ENCODE measurements at regions of chr6 and their contacts with region 1.

Region 1: DNA sequence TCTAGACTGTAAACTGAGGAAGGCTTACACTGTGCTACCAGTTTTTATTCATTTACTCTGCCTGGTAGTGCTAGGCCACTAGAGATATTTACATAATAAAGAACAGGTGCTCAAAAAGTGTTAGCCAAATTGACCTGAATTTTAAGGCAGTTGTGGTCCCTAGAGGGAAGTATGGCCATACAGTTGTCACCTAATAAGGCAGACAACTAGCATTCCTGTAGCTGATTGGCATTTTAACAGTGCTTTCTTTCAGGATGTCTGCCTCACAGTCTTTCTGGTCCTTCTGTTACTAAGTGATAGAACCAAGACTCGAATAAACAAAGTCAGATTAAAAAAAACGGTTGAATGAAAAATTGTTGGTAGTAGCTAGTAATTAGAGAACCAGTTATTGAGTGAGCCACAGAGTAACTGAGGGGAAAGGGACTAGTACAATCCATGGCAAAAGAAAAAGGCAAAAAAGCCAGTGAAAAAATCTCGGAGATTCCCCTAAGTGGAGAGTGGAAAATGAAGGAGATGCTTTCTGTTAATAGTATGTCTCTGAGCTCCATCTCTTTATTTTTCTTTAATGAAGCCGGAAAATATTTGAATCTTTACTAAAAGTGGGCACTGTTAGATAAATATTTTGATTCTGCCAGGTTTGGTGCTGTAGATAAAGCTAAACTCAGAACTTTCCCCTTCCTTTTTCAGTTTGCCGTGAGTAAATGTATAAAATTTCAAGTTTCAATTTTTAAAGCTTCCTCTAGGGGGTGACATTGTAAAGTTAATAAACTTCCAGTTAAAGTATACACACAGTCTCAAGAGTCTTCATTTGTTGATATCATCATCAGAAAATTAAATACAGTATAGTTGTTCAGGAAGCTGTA is 9.1 kb downstream of the VTA1 start:
- DNase-seq: no peak
- H3K4me3 ChIP-seq: peak overlapping the region in 1 of 2 donors; percentile 11
- H3K27ac ChIP-seq: no peak overlapping the region
- H3K4me1 ChIP-seq: peaks cover 0 to 18% of the 10 kb centered on the region in 2 donors
- H3K27me3 ChIP-seq: no peaks in the 10 kb centered on the region
- CTCF ChIP-seq: peak in 2 of 3 experiments; percentile 34 to 47

Region 2: GRCh38 chr6:142132625-142133024 is 23.5 kb before region 1 on chr6 and contains the start of gene GJE1:
- intact Hi-C with region 1: no loop called
- DNase-seq: no peak
- H3K4me3 ChIP-seq: no peak within 1 kb of the TSS
- H3K27ac ChIP-seq: no peak within 1 kb of the TSS
- H3K4me1 ChIP-seq: no peaks in the 10 kb centered on the region
- H3K27me3 ChIP-seq: no peaks in the 10 kb centered on the region
- CTCF ChIP-seq: no peak
- total RNA-seq, gene GJE1: not detected

Region 3: DNA sequence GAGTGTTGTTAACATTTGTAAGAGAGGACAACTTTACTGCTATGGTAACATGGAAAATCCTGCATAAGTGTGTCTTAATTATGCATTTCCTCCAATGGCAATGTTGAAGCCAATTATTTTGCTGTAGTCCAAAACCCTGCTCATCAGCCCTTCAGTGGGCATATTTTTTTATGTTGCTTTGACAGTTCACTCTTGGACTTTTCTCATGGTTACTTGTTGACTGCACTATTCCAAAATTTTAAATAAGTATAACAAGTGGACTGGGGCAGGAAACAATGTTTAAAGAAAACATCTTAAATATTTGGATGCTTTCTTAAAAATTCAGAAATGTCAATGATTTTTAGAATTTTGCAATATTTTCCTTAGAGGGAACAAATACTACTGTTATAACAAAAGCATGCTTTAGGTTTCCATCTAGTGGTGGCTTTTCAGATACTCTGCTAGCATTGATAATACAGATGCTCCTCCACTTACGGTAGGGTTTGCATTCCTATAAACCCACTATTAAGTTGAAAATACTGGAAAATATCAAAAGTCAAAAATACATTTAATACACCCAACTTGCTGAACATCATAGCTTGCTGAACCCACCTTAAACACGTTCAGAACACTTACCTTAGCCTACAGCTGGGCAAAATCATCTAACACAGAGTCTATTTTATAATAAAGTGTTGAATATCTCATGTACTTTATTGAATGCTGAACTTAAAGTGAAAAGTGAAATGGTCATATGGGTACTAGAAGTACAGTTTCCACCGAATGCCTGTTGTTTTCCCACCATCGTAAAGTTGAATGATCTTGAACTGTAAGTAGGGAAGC is 232.1 kb after region 1 on chr6:
- intact Hi-C with region 1: loop called (anchors 5 kb)
- DNase-seq: no peak
- H3K4me3 ChIP-seq: no peak overlapping the region
- H3K27ac ChIP-seq: no peak overlapping the region
- H3K4me1 ChIP-seq: no peaks in the 10 kb centered on the region
- H3K27me3 ChIP-seq: no peaks in the 10 kb centered on the region
- CTCF ChIP-seq: peak; percentile 23 to 46 (median 38)

Region 4: DNA sequence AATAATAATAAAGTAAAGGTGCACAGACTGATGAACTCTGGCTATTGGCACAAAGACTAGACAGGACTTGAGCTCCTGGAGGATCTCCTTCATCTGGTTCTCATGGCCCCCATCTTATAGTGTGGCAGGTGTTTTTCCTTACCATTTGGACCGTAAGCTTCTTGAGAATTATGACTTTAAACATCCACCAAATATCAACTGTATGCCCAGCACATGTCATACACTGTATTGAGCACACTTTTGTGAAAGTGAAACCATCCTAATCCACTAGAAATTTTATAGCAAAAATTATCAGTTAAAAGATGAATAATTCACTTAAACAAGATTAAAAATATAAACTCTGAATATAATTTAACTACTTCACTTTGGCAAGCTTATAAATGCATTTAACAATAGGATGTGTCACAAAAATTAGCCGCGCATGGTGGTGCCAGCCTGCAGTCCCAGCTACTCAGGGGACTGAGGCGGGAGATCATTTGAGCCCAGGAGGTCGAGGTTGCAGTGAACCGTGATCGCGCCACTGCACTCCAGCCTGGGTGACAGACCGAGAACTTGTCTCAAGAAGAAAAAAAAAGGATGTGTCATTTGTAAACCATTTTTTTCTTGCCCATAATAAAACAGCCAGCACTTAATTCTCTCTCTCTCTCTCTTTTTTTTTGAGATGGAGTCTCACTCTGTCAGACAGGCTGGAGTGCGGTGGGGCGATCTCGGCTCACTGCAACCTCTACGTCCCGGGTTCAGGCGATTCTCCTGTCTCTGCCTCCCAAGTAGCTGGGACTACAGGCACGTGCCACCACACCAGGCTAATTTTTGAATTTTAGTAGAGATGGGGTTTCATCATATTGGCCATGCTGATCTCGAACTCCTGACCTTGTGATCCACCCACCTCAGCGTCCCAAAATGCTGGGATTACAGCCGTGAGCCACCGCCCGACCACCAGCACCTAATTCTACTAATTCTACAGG is 779.7 kb after region 1 on chr6:
- intact Hi-C with region 1: no loop called
- DNase-seq: no peak
- H3K4me3 ChIP-seq: no peak overlapping the region
- H3K27ac ChIP-seq: no peak overlapping the region
- H3K4me1 ChIP-seq: peaks cover 0 to 7% of the 10 kb centered on the region in 2 donors
- H3K27me3 ChIP-seq: no peaks in the 10 kb centered on the region
- CTCF ChIP-seq: no peak

Measured in ascending aorta (tissue), 2 donors.